ENCODE measurements at regions of chrX and their contacts with region 1.

Region 1: DNA sequence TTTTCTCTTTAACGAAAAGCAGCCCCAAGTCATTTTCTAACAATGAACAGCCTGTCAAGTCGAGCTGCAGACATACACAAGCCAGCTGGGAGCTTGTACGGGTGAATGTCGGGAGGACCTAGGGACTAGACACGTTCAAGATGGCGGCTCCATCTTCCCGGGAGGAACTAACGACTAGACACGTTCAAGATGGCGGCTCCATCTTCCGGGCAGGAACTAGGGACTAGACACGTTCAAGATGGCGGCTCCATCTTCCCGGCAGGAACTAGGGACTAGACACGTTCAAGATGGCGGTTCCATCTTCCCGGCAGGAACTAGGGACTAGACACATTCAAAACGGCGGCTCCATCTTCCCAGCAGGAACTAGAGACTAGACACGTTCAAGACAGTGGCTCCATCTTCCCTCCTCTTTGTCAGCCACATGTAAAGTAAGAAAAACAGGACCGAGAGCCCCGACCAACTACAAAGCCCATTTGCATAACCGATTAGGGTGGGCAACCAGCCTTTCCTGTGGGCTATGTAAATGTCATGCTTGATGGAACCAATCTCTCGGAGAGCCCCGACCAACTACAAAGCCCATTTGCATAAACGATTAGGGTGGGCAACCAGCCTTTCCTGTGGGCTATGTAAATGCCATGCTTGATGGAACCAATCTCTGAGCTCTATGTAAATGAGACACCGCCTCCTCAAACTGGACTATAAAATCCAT is 175.5 kb downstream of the DHRSX start:
- DNase-seq: peak; percentile 38 to 83
- H3K4me3 ChIP-seq: peak overlapping the region in 1 of 3 donors; percentile 38
- H3K27ac ChIP-seq: no peak overlapping the region
- H3K4me1 ChIP-seq: peaks cover 7 to 9% of the 10 kb centered on the region in 2 donors
- H3K27me3 ChIP-seq: no peaks in the 10 kb centered on the region
- CTCF ChIP-seq: no peak
- POLR2A ChIP-seq: peak in 1 of 2 donors; percentile 50

Region 2: GRCh38 chrX:989959-990510 is 1335.2 kb before region 1 on chrX:
- intact Hi-C with region 1: loop called (anchors 10 kb)
- DNase-seq: peak; percentile 45 to 61
- H3K4me3 ChIP-seq: peak overlapping the region in 1 of 3 donors; percentile 14
- H3K27ac ChIP-seq: peak overlapping the region in 1 of 3 donors; percentile 56
- H3K4me1 ChIP-seq: peaks cover 0 to 8% of the 10 kb centered on the region in 2 donors
- H3K27me3 ChIP-seq: no peaks in the 10 kb centered on the region
- CTCF ChIP-seq: no peak
- POLR2A ChIP-seq: no peak

Region 3: GRCh38 chrX:2500267-2501075 is 175.2 kb after region 1 on chrX and contains the starts of genes DHRSX and ZBED1:
- intact Hi-C with region 1: loop called (anchors 10 kb)
- DNase-seq: peak; percentile 25 to 33
- H3K4me3 ChIP-seq: peak within 1 kb of the TSS; percentile 92 to 99 (median 95)
- H3K27ac ChIP-seq: peak within 1 kb of the TSS; percentile 75 to 93 (median 89)
- H3K4me1 ChIP-seq: peaks cover 30% of the 10 kb centered on the region in 2 donors
- H3K27me3 ChIP-seq: no peaks in the 10 kb centered on the region
- CTCF ChIP-seq: peak in 1 of 6 experiments; percentile 11
- POLR2A ChIP-seq: peak in 1 of 2 donors; percentile 47
- total RNA-seq, gene DHRSX: 19.9 to 36.5 (median 24.2) TPM
- total RNA-seq, gene ZBED1: 32.4 to 48.6 (median 45.2) TPM

Region 4: DNA sequence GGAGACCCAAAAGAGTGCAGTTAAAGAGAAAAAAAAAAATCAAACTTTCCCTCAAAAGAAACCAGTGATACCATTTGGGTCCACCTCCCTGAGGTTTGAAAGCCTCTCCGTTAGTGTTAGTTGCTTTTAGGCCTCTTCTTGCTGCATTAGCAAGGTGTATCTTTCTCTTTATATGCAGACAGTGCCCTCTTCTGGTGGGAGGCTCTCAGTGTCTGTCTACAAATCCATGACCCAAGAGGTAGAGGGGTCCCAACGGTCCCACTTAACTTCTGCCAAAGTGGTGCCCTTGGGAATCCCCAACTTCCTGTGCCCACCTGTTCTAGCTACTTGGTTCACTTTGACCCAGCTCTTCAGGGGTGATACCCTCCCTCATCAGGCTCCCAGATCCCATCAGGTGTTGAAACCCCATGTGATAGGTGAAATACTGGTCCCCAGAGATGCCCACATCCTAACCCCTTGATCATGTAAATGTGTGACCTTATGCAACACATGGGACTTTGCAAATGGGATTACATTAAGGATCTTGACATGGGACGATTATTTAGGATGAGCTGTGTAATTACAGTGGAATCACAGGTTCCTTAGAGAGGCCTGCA is 302.1 kb after region 1 on chrX:
- intact Hi-C with region 1: loop called (anchors 10 kb)
- DNase-seq: peak; percentile 43 to 46
- H3K4me3 ChIP-seq: no peak overlapping the region
- H3K27ac ChIP-seq: no peak overlapping the region
- H3K4me1 ChIP-seq: no peaks in the 10 kb centered on the region
- H3K27me3 ChIP-seq: no peaks in the 10 kb centered on the region
- CTCF ChIP-seq: peak in 5 of 6 experiments; percentile 21 to 53 (median 45)
- POLR2A ChIP-seq: no peak

Measured in thyroid gland (tissue), 4 donors.